Dorsolateral prefrontal cortex (tissue), 120 donors: ENCODE measurements at regions of chr4 and their contacts with region 1.

Region 1: GRCh38 chr4:122758033-122758432 is 25.5 kb downstream of the BBS12 start:
- DNase-seq: no peak
- H3K4me3 ChIP-seq: peak overlapping the region in 5 of 59 donors; percentile 0 to 16 (median 4)
- H3K27ac ChIP-seq: no peak overlapping the region
- H3K27me3 ChIP-seq: peaks cover 0 to 9% (median 0%) of the 10 kb centered on the region in 45 donors
- CTCF ChIP-seq: peak; percentile 70 to 94 (median 83)

Region 2: GRCh38 chr4:122668241-122668640 is 89.8 kb before region 1 on chr4:
- intact Hi-C with region 1: no loop called
- DNase-seq: no peak
- H3K4me3 ChIP-seq: no peak overlapping the region
- H3K27ac ChIP-seq: no peak overlapping the region
- H3K27me3 ChIP-seq: no peaks in the 10 kb centered on the region
- CTCF ChIP-seq: no peak

Region 3: GRCh38 chr4:122718281-122718680 is 39.8 kb before region 1 on chr4:
- intact Hi-C with region 1: no loop called
- DNase-seq: no peak
- H3K4me3 ChIP-seq: no peak overlapping the region
- H3K27ac ChIP-seq: no peak overlapping the region
- H3K27me3 ChIP-seq: no peaks in the 10 kb centered on the region
- CTCF ChIP-seq: no peak

Region 4: DNA sequence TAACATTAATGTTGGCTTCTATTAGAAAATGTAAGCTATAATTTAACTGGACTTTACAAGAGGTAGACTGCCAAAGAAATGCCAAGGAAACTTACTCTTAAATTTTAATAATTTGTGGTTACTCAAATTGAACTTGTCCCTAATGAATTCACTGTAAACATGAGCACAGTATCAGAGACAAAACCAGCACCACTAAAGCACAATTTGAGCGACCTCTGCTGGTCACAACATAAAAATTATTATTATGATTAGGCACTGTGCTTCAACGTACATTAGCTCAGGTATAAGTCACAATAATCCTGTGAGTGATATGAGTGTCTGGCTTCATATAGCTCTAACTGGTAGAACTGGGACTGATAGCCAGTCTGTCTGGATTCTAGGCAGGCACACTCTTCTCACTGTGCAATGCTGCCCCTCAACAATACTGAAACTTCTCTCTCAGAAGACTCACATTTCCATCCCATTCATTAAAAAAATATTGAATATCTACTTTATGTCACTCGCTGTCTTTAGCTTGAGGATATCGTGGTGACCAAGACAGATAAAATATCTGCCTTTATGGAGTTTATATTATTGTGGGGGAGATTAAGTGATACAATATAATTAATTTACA is 156.4 kb after region 1 on chr4:
- intact Hi-C with region 1: loop called in 1 of 2 experiments (anchors 5 kb)
- DNase-seq: no peak
- H3K4me3 ChIP-seq: no peak overlapping the region
- H3K27ac ChIP-seq: no peak overlapping the region
- H3K27me3 ChIP-seq: no peaks in the 10 kb centered on the region
- CTCF ChIP-seq: peak in 44 of 56 donors; percentile 13 to 82 (median 52)

Region 5: DNA sequence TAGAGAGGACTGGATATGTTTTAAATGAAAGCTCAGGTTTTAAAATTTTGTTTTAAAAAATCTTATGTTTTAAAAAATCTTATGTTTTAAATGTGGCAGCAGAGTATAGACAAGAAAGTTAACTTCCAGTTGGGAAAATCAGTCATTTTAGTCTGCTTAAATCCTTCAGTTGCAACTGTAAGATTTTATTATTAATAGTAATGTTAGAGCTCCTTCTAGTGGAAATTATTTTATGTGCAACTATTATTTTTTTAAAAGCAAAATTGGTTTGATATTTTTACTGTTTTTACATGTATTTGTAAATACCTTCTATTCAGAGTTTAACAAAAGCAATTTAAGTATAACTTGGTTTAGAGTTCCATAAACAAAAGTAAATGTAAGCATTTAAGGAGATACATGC is 172.8 kb after region 1 on chr4:
- intact Hi-C with region 1: loop called (anchors 5 kb)
- DNase-seq: no peak
- H3K4me3 ChIP-seq: no peak overlapping the region
- H3K27ac ChIP-seq: no peak overlapping the region
- H3K27me3 ChIP-seq: no peaks in the 10 kb centered on the region
- CTCF ChIP-seq: peak; percentile 44 to 88 (median 65)